ENCODE measurements at regions of chr2 and their contacts with region 1.

Region 1: DNA sequence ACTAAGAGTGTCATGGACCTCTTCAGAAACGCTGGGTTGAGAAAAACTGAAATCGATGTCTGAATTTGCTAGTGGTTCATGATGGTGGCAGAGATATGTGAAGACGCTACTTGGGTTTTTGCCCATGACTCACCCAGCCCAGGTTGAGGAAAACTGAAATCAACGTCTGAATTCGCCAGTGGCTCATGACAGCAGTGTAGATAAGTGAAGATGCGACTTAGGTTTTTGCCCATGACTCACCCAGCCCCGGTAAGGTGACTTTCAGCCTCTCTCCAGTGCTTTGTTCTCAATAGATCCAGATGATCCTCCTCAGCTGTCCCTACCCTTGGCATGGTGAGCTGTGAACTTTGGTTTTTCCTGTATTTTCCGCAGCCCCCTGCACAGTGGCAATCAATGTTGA is 105.3 kb upstream of the SIX3 start:
- DNase-seq: peak; percentile 31
- H3K4me3 Mint-ChIP-seq: no peak overlapping the region
- H3K27ac Mint-ChIP-seq: peak overlapping the region; percentile 14
- H3K4me1 Mint-ChIP-seq: peaks cover 33% of the 10 kb centered on the region
- H3K27me3 Mint-ChIP-seq: no peaks in the 10 kb centered on the region

Region 2: GRCh38 chr2:44578421-44579135 is 257.6 kb before region 1 on chr2:
- intact Hi-C with region 1: loop called (anchors 2 kb)
- DNase-seq: no peak
- H3K4me3 Mint-ChIP-seq: peak overlapping the region; percentile 24
- H3K27ac Mint-ChIP-seq: peak overlapping the region; percentile 76
- H3K4me1 Mint-ChIP-seq: peaks cover 29% of the 10 kb centered on the region
- H3K27me3 Mint-ChIP-seq: no peaks in the 10 kb centered on the region

Region 3: DNA sequence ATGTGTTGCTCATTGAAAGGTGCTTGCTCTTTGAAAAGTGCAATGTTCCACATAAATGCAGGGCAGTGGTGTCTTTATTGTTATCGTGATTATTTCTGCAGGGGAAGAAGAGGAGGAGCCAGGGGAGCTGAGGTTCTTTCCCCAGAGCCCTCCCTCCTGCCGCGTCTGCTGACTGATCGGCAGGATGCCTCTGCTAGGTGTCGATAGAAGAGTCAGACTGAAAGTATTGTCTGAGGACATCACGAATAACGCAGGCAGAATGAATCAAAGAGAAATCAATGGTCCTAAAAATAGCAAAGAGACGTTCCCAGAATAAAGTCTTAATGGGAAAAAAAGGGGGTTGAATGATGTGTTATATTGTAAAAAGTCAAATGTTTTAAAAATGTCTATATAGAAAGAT is 57.9 kb after region 1 on chr2:
- intact Hi-C with region 1: no loop called
- DNase-seq: no peak
- H3K4me3 Mint-ChIP-seq: no peak overlapping the region
- H3K27ac Mint-ChIP-seq: no peak overlapping the region
- H3K4me1 Mint-ChIP-seq: no peaks in the 10 kb centered on the region
- H3K27me3 Mint-ChIP-seq: peaks cover 7% of the 10 kb centered on the region

Region 4: DNA sequence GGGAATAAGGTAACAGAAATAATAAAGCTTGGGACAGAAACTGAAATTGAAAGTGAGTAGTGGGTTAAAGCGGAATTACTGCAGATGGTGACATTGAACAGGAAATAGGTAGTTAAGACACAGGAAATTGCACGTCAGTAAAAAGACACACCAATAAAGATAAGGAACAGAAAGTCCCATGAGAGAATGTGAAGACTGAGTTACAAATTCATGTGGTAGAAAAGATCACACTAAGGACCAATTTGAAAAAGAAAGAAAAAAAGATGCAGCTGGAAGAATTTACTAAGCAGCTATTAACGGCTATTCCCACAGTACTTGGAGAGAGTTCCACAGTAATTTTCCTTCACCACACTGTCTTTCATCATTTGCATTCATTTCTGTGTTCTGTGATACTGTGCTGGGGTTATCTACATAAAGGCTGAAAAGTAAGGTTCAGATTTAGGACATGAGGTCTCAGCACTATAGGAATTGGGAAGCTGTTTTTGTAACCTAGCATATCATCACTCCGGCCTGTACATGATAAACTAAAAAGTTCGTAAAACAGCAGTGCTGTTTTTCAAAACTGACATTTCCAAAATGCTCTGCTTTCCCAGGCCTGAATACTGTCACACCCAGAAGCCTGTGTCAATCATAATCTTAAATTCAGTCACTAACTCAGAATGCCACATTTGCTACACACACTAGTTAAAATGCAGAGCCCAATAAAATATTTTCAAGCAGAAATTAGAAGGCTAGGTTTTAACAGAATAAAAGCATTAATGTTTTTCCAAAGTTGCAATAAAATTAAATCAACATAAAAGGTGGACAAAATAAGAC is 732.0 kb after region 1 on chr2:
- intact Hi-C with region 1: loop called (anchors 5 kb)
- DNase-seq: peak; percentile 10
- H3K4me3 Mint-ChIP-seq: peak overlapping the region; percentile 77
- H3K27ac Mint-ChIP-seq: peak overlapping the region; percentile 94
- H3K4me1 Mint-ChIP-seq: peaks cover 22% of the 10 kb centered on the region
- H3K27me3 Mint-ChIP-seq: no peaks in the 10 kb centered on the region